ENCODE measurements at regions of chr14 and their contacts with region 1.

Region 1: DNA sequence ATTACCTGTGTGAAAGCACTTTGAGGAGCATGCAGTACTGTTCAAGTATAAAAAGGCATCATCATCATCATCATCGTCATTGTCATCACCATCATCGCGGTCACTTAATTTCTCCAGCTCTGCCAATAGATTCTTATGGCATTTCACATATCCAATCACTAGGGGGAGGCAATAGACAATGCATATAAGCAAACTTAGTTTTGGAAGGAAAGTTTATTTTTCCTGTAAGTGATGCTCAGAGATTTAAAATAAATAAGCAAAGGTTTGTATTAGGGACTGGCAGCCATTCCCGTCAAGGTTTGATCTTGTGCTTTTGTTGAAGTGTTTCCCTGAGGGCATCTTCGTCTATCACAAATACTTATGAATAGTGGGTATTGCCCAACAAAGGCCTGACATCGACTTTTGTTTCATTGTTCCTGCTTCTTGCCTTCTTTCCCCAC is 127.4 kb downstream of the KTN1 start:
- DNase-seq: no peak
- H3K4me3 ChIP-seq: no peak overlapping the region
- H3K27ac ChIP-seq: no peak overlapping the region
- H3K4me1 ChIP-seq: peaks cover 0 to 16% (median 3%) of the 10 kb centered on the region in 4 donors
- H3K27me3 ChIP-seq: no peaks in the 10 kb centered on the region
- CTCF ChIP-seq: peak; percentile 70 to 77

Region 2: DNA sequence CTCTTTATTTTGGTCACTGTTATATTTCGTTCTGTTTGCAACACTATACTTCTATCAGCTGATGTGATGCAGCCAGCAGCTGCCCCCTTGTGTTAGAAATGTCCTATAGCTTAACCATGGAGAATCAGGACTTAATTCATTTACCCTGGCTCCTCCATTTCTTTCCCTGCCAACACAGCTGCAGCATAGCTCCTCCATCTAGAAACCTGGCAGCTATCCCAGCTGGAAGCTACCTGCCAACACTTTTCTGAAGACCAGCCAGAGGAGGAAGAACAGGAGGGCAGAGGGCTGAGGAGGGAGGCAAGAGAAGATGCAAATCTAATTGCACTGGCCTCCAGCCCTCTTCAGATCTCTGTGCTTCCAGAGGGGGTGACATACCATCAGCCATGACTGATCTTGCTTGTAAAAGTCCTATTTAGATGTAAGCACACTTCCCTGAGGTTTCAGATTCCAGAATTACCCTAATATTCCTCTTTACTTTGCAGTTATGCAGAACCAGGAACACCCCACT is 715.4 kb after region 1 on chr14:
- intact Hi-C with region 1: loop called (anchors 5 kb)
- DNase-seq: peak; percentile 66 to 74
- H3K4me3 ChIP-seq: no peak overlapping the region
- H3K27ac ChIP-seq: no peak overlapping the region
- H3K4me1 ChIP-seq: peaks cover 0 to 14% (median 6%) of the 10 kb centered on the region in 4 donors
- H3K27me3 ChIP-seq: no peaks in the 10 kb centered on the region
- CTCF ChIP-seq: peak; percentile 84 to 88

Region 3: DNA sequence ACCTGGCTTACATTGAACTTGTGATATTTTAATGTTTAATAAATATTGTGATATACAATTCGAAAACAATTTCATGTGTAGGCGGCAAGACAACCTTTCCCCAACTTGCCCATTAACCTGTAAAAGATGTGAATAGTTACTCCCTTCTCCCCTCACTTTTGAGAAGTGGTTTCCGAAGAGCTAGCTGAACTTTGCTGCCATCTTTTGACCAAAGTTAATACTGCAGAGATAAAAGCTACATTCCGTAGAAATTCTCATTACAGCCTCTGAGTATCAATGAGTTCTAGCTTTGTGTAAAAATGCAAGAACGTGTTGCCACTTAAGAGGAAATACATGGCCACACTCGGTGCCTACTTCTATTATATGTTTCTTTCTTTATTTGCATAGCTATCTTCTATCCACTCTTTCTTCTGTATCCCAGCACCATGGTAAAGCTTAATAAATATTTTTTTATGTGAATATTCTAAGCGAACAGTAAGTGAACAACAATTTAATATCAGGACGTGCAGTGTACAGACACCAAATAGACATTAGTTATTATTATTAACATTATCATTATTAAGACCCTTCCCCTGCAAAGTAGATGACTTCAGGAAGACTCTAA is 767.1 kb after region 1 on chr14:
- intact Hi-C with region 1: loop called (anchors 5 kb)
- DNase-seq: no peak
- H3K4me3 ChIP-seq: no peak overlapping the region
- H3K27ac ChIP-seq: no peak overlapping the region
- H3K4me1 ChIP-seq: no peaks in the 10 kb centered on the region
- H3K27me3 ChIP-seq: no peaks in the 10 kb centered on the region
- CTCF ChIP-seq: peak; percentile 80 to 85

Measured in tibial artery (tissue), 4 donors.